ENCODE measurements at regions of chr5 and their contacts with region 1.

Region 1: DNA sequence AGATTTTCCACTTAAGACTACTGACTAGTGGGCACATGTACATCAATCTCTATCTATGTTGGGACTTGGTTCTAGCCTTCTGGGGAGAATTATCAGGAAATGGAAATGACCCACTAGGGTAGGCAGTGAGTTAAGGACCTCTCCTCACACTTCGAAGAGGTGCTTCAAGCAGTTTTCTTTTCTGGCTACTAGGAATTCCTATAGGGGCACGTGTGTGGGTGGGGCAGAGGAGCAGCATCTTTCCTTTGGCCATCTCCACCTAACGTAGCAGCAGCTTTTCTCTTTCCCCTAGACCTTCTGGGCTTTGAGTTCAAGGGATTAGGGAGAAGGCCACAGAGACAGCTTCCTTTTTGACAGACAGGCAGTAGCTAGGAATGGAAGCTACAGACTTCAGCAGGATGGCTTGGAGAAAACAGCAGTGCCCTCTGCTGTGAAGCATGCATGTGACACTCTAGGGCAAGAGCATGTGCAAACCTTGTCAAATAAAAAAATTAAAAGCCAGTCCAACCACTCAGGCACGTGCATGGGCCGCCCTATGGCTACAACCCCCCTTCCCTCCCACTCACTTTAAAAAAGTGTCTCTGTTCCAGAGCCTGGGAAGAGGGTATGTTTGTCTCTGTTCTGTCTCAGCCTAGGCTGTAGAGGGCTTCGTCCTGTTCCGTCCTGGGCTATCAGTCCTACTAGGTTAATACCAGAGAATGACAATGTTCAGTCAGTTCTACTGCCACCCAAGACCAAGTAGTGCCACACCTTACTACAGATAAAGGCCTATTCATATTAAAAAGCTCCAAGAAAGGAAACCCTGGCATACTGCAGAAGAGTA is 8.7 kb upstream of the GFRA3 start:
- DNase-seq: peak; percentile 57
- ATAC-seq: peak; percentile 95
- H3K4me3 Mint-ChIP-seq: no peak overlapping the region
- H3K27ac Mint-ChIP-seq: no peak overlapping the region
- H3K4me1 Mint-ChIP-seq: no peaks in the 10 kb centered on the region
- H3K27me3 Mint-ChIP-seq: no peaks in the 10 kb centered on the region
- CTCF ChIP-seq: no peak

Region 2: GRCh38 chr5:138102454-138103318 is 180.4 kb before region 1 on chr5:
- CTCF ChIA-PET with region 1: no interaction called
- POLR2A ChIA-PET with region 1: no interaction called
- DNase-seq: no peak
- ATAC-seq: peak; percentile 36
- H3K4me3 Mint-ChIP-seq: no peak overlapping the region
- H3K27ac Mint-ChIP-seq: no peak overlapping the region
- H3K4me1 Mint-ChIP-seq: peaks cover 21% of the 10 kb centered on the region
- H3K27me3 Mint-ChIP-seq: peaks cover 79% of the 10 kb centered on the region
- CTCF ChIP-seq: no peak

Region 3: GRCh38 chr5:138223532-138223931 is 59.6 kb before region 1 on chr5:
- CTCF ChIA-PET with region 1: interaction called, 26 read pairs
- POLR2A ChIA-PET with region 1: no interaction called
- DNase-seq: no peak
- ATAC-seq: no peak
- H3K4me3 Mint-ChIP-seq: no peak overlapping the region
- H3K27ac Mint-ChIP-seq: no peak overlapping the region
- H3K4me1 Mint-ChIP-seq: 0 out of 2 replicates have a peak, but pooled peaks cover 3% of the 10 kb centered on the region
- H3K27me3 Mint-ChIP-seq: peaks cover 2% of the 10 kb centered on the region
- CTCF ChIP-seq: no peak